CD4-positive, alpha-beta memory T cell (primary cell): ENCODE measurements at regions of chr19 and their contacts with region 1.

Region 1: DNA sequence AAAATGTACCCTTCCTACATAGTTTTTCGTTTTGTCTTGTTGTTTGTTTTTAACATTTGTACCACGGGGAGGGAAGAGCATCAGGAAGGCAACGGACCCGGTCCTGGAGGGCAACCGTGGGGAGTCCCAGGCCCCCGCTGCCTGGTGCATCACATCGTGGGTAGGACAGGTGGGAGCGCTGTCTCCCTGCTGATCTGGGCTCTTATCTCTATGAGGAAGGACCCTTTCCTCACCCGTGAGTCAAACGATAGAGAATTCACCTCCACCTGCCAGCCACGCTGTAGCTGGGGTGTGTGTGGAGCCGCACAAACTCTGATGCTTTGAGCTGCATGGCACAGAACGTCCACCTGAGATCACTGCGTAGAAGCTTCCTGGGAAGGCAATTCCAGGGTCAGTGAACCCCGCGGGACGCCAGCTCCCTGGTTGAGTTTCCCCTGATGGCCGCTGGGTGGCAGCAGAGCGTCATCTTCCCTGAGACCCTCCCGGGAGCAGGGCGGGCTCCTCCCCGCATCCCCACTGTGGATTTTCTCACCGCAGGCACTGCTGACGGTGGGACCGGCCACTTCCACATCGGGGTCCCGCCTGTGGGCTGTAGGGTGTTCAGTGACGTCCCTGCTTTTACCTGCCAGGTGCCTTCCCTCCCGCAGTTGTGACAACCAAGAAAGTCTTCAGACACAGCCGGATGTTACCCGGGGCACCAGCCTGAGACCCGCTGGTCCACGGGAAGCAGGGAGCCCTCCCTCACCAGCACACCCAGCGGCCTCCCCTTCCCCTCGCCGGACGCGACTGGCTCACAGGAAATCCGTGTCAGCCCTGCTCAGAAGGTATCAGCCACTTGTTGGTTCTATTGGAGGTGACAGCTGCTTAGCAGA is 54.7 kb downstream of the ZNF787 start:
- DNase-seq: peak; percentile 50 to 61 (median 54)
- H3K4me3 ChIP-seq: peak overlapping the region in 1 of 2 donors; percentile 30
- H3K4me3 Mint-ChIP-seq: peak overlapping the region; percentile 64 to 77 (median 73)
- H3K27ac ChIP-seq: no peak overlapping the region
- H3K27ac Mint-ChIP-seq: peak overlapping the region in 4 of 7 donors; percentile 10 to 73 (median 24)
- H3K4me1 ChIP-seq: peaks cover 11% of the 10 kb centered on the region
- H3K4me1 Mint-ChIP-seq: peaks cover 3 to 13% (median 9%) of the 10 kb centered on the region in 4 donors
- H3K27me3 ChIP-seq: no peaks in the 10 kb centered on the region
- H3K27me3 Mint-ChIP-seq: peaks cover 22 to 31% of the 10 kb centered on the region in 2 donors

Region 2: GRCh38 chr19:55930996-55931515 is 135.3 kb before region 1 on chr19:
- CTCF ChIA-PET with region 1: no interaction called
- POLR2A ChIA-PET with region 1: no interaction called
- intact Hi-C with region 1: no loop called
- DNase-seq: no peak
- H3K4me3 ChIP-seq: no peak overlapping the region
- H3K4me3 Mint-ChIP-seq: no peak overlapping the region
- H3K27ac ChIP-seq: no peak overlapping the region
- H3K27ac Mint-ChIP-seq: no peak overlapping the region
- H3K4me1 ChIP-seq: no peaks in the 10 kb centered on the region
- H3K4me1 Mint-ChIP-seq: no peaks in the 10 kb centered on the region
- H3K27me3 ChIP-seq: no peaks in the 10 kb centered on the region
- H3K27me3 Mint-ChIP-seq: peaks cover 0 to 3% of the 10 kb centered on the region in 2 donors

Region 3: DNA sequence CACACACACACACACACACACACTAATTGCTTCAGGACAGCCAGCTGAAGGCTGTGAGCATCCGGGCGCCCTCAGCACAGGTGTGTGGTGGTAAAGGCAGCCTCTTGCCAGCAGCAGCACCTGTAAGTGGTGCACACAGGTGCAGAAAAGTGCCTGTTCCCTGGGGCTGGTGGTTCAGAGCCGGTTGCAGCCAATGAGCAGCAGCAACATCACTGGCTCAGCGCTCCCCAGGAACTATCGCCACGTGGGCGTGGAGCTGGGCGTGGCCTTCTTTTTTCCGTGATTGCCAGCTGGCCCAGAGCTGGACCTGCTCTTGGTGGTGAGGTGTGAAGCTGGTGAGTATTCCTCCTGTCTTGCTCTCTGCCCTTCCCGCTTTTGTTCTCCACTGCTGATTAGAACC is 79.9 kb before region 1 on chr19 and contains the start of gene NLRP5:
- CTCF ChIA-PET with region 1: no interaction called
- POLR2A ChIA-PET with region 1: no interaction called
- intact Hi-C with region 1: no loop called
- DNase-seq: no peak
- H3K4me3 ChIP-seq: no peak within 1 kb of the TSS
- H3K4me3 Mint-ChIP-seq: no peak within 1 kb of the TSS
- H3K27ac ChIP-seq: no peak within 1 kb of the TSS
- H3K27ac Mint-ChIP-seq: no peak within 1 kb of the TSS
- H3K4me1 ChIP-seq: no peaks in the 10 kb centered on the region
- H3K4me1 Mint-ChIP-seq: no peaks in the 10 kb centered on the region
- H3K27me3 ChIP-seq: no peaks in the 10 kb centered on the region
- H3K27me3 Mint-ChIP-seq: no peaks in the 10 kb centered on the region
- total RNA-seq, gene NLRP5: not detected

Region 4: GRCh38 chr19:56080669-56081401 is 14.4 kb after region 1 on chr19:
- CTCF ChIA-PET with region 1: interaction called, 14 read pairs
- POLR2A ChIA-PET with region 1: no interaction called
- intact Hi-C with region 1: no loop called
- DNase-seq: peak; percentile 47 to 74 (median 60)
- H3K4me3 ChIP-seq: peak overlapping the region; percentile 23 to 59
- H3K4me3 Mint-ChIP-seq: peak overlapping the region; percentile 79 to 94 (median 84)
- H3K27ac ChIP-seq: no peak overlapping the region
- H3K27ac Mint-ChIP-seq: peak overlapping the region in 2 of 7 donors; percentile 34 to 48
- H3K4me1 ChIP-seq: peaks cover 10% of the 10 kb centered on the region
- H3K4me1 Mint-ChIP-seq: peaks cover 10 to 15% (median 12%) of the 10 kb centered on the region in 4 donors
- H3K27me3 ChIP-seq: no peaks in the 10 kb centered on the region
- H3K27me3 Mint-ChIP-seq: peaks cover 0 to 5% of the 10 kb centered on the region in 2 donors

Region 5: DNA sequence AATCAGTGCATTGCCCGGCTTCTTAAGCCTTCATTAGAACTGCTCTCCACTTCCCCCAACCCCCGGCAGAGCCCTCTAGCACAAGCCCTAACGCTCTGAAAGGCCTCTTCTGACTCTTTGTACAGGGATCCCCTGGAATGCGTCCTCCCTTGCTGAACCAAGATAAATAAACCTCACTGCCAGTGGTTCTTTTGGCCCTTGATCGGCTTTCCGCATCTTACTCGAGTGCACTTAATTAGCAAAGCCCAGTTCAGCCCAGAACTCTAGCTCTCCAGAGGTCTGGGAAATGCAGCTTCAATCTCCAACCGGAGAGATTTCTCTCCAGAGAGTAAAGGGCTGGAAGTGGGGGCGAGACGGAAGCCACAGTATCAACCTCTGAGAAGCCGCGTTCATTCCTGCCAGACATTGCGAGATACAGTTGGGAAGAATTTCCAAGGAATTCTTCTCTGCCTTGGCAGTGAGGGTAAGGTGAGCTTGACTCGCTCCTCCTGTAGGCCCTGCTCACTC is 66.0 kb after region 1 on chr19:
- CTCF ChIA-PET with region 1: no interaction called
- POLR2A ChIA-PET with region 1: no interaction called
- intact Hi-C with region 1: no loop called
- DNase-seq: no peak
- H3K4me3 ChIP-seq: no peak overlapping the region
- H3K4me3 Mint-ChIP-seq: no peak overlapping the region
- H3K27ac ChIP-seq: no peak overlapping the region
- H3K27ac Mint-ChIP-seq: peak overlapping the region in 1 of 7 donors; percentile 5
- H3K4me1 ChIP-seq: no peaks in the 10 kb centered on the region
- H3K4me1 Mint-ChIP-seq: no peaks in the 10 kb centered on the region
- H3K27me3 ChIP-seq: no peaks in the 10 kb centered on the region
- H3K27me3 Mint-ChIP-seq: no peaks in the 10 kb centered on the region

Region 6: GRCh38 chr19:56170261-56170660 is 103.9 kb after region 1 on chr19:
- CTCF ChIA-PET with region 1: interaction called, 29 read pairs
- POLR2A ChIA-PET with region 1: no interaction called
- intact Hi-C with region 1: loop called (anchors 1 kb)
- DNase-seq: no peak
- H3K4me3 ChIP-seq: no peak overlapping the region
- H3K4me3 Mint-ChIP-seq: no peak overlapping the region
- H3K27ac ChIP-seq: no peak overlapping the region
- H3K27ac Mint-ChIP-seq: peak overlapping the region in 1 of 7 donors; percentile 9
- H3K4me1 ChIP-seq: no peaks in the 10 kb centered on the region
- H3K4me1 Mint-ChIP-seq: peaks cover 0 to 5% (median 3%) of the 10 kb centered on the region in 4 donors
- H3K27me3 ChIP-seq: no peaks in the 10 kb centered on the region
- H3K27me3 Mint-ChIP-seq: peaks cover 9 to 12% of the 10 kb centered on the region in 2 donors

Region 7: DNA sequence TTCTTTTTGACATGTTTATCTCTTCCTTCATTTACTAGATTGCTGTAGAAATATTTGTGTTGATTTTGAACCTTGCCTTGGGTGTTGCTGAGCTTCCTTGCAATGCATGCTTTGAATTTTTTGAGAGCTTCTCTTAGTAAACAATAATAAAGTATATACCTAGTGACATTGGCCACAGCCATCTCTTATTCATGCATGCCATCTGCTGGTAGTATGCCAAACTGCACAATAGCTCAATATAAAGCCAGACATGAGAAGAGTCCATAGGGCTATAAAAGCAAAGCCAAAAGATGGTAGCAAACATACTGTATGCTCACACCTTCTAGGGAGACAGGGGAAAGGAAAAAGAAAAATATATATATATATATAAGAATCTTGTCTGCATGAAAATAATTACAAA is 267.1 kb after region 1 on chr19:
- CTCF ChIA-PET with region 1: interaction called, 22 read pairs
- POLR2A ChIA-PET with region 1: no interaction called
- intact Hi-C with region 1: loop called (anchors 1 kb)
- DNase-seq: peak in 4 of 5 donors; percentile 29 to 40 (median 40)
- H3K4me3 ChIP-seq: no peak overlapping the region
- H3K4me3 Mint-ChIP-seq: no peak overlapping the region
- H3K27ac ChIP-seq: no peak overlapping the region
- H3K27ac Mint-ChIP-seq: no peak overlapping the region
- H3K4me1 ChIP-seq: no peaks in the 10 kb centered on the region
- H3K4me1 Mint-ChIP-seq: no peaks in the 10 kb centered on the region
- H3K27me3 ChIP-seq: no peaks in the 10 kb centered on the region
- H3K27me3 Mint-ChIP-seq: peaks cover 3 to 6% of the 10 kb centered on the region in 2 donors

Region 8: DNA sequence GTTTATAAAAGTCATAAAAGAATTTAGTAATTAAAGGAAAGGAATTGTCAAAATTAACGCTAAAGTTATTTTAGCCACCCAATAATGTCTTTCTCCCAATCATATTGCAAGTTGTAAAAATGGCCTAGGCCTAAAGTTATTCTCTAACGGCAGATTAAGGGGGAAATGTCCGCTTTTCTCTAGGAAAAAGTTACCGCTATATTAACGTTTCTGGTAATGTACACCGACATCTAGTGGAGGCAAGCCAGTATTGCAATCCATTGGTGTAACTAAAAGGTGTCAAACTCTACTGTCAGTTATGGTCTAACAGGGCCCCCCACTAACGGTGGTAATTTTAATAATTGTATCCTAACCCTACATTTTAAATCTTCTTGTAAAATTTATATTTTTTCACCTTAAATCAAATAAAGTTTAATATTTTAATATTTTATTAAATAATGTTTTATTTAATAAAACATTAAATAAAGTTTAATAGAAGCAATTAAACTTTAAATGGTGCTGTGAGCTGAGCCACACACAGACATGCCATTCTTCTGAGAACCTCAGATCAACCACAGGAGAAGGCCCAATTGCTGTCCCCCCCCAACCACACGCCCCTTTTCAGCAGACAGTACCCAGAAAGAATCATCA is 284.1 kb after region 1 on chr19:
- CTCF ChIA-PET with region 1: interaction called, 8 read pairs
- POLR2A ChIA-PET with region 1: no interaction called
- intact Hi-C with region 1: loop called (anchors 1 kb)
- DNase-seq: peak; percentile 35 to 57 (median 46)
- H3K4me3 ChIP-seq: no peak overlapping the region
- H3K4me3 Mint-ChIP-seq: no peak overlapping the region
- H3K27ac ChIP-seq: no peak overlapping the region
- H3K27ac Mint-ChIP-seq: no peak overlapping the region
- H3K4me1 ChIP-seq: no peaks in the 10 kb centered on the region
- H3K4me1 Mint-ChIP-seq: peaks cover 0 to 1% (median 0%) of the 10 kb centered on the region in 4 donors
- H3K27me3 ChIP-seq: no peaks in the 10 kb centered on the region
- H3K27me3 Mint-ChIP-seq: peaks cover 1% of the 10 kb centered on the region in 2 donors

Region 9: DNA sequence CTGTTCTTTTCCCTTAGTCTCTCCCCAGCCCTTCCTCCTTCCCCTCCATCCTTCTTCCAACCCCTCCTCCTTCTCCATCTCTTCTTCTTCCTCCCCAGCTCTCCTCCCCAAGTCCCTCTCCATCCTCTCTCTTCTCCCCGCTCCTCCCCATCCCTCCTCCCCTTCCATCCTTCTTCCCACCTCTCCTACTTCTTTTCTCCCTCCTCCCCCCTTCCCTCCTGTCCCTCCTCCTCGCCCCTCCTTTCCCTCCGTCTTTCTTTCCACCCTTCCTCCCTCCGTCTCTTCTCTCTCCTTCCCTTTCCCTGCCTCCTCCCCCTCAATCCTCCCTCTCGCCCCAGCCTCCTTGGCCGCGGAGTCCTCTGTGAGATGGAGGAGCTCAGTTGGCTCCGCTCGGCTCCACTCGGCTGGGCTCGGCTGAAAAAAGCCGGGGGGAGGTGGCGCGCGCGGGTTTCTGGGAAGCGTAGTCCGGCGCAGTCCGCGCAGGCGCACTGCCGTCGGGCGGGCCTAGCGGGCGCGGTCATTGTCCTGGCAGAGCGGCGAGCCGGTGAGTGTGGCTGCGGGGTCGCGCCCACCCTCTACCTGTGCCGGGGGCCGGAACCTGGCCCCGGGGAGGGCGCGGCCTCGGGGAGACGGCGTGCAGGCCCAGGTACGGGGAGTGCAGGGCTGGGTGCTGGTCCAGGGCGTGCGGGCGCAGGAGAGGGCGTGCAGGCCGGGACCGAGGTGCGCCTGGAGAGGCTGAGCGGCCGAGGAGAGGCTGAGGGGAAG is 528.6 kb after region 1 on chr19 and contains the start of gene ZNF71:
- CTCF ChIA-PET with region 1: no interaction called
- POLR2A ChIA-PET with region 1: no interaction called
- intact Hi-C with region 1: no loop called
- DNase-seq: peak; percentile 82 to 87 (median 83)
- H3K4me3 ChIP-seq: peak within 1 kb of the TSS; percentile 55 to 57
- H3K4me3 Mint-ChIP-seq: peak within 1 kb of the TSS; percentile 88 to 98 (median 93)
- H3K27ac ChIP-seq: peak within 1 kb of the TSS; percentile 63
- H3K27ac Mint-ChIP-seq: peak within 1 kb of the TSS; percentile 54 to 94 (median 91)
- H3K4me1 ChIP-seq: peaks cover 17% of the 10 kb centered on the region
- H3K4me1 Mint-ChIP-seq: peaks cover 12 to 22% (median 16%) of the 10 kb centered on the region in 4 donors
- H3K27me3 ChIP-seq: no peaks in the 10 kb centered on the region
- H3K27me3 Mint-ChIP-seq: peaks cover 0 to 2% of the 10 kb centered on the region in 2 donors
- total RNA-seq, gene ZNF71: 8.2 to 8.3 TPM